Endothelial cell of umbilical vein (primary cell): ENCODE measurements at regions of chr15 and their contacts with region 1.

Region 1: DNA sequence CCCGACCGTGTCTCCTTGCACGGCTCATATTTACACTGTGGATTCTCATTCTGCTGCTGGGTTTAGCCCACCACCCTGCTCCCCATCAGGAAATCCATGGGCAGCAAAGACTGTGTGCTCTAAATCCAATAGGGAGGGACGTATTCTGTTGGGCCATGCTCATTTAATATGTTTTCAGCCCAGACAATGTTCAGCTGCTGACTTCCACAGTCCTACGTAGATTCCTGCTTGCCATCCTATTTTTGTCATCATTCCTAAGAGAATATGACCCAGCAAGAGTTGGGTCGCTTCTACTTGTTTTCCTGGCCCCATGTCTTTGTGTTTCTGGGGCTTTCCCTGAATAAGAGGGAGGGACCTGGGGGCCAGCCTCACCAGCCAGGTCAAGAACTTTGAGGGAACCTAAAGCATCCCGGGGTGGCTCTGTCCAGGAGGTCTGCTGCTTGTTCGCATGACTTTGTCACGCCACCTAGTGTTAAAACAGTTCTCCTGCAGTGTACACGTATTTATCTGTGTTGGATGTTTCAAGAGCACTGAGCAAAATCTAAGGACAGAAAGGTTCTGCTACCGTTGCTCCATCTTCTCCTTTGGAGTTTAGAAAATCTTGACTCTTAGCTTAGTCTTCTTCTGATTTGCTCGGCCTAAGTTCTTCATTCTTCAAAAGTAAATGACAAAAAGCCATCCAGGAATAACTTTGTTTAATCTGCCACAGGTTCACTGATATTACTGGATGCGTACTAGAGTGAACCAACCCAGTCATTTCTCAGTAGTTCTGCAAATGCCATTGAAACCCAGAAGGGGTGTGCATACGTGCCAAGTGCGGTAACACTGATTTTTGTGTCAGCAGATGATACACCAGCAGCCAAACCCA is 79.8 kb upstream of the NR2E3 start:
- DNase-seq: peak; percentile 66
- H3K4me3 ChIP-seq: no peak overlapping the region
- H3K27ac ChIP-seq: no peak overlapping the region
- H3K4me1 ChIP-seq: no peaks in the 10 kb centered on the region
- H3K27me3 ChIP-seq: peaks cover 0 to under 1% of the 10 kb centered on the region in 2 experiments
- CTCF ChIP-seq: peak; percentile 67 to 76
- POLR2A ChIP-seq: no peak

Region 2: DNA sequence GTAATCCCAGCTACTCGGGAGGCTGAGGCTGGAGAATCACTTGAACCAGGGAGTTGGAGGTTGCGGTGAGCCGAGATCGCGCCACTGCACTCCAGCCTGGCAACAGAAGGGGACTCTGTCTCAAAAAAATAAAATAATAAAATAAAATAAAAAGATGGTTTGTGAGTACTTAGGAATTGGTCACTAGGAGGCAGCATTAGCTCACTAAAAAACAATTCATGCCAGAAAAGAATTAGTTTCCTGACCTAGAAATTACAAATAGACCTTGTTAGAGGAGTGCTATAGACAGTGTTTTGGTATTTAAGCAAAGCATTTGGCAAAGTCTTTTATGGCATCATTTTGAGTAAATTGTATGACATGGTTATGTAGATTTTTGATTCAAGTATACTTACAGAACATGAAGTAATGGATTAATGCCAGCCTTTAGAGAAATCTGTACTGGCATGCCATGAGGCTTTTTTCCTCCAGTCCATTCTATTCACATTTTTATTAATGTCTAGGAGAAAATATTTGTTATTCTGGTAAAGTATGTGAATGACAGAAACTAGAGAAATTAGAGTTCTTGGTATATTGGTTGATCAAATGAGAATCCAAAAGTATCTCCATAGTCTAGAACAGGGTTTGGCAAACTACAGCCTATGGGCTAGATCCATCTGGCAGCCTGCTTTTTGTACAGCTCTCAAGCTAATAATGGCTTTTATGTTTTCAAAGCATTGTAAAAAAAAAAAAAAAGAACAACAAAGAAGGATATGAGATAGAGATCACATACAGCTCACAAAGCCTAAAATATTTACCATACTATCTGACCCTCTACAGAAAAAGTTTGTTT is 756.3 kb before region 1 on chr15:
- CTCF ChIA-PET with region 1: no interaction called
- POLR2A ChIA-PET with region 1: no interaction called
- dilution Hi-C with region 1: no loop called
- intact Hi-C with region 1: loop called (anchors 5 kb)
- DNase-seq: peak; percentile 66
- H3K4me3 ChIP-seq: no peak overlapping the region
- H3K27ac ChIP-seq: no peak overlapping the region
- H3K4me1 ChIP-seq: no peaks in the 10 kb centered on the region
- H3K27me3 ChIP-seq: no peaks in the 10 kb centered on the region
- CTCF ChIP-seq: peak in 1 of 2 donors; percentile 38
- POLR2A ChIP-seq: no peak

Region 3: GRCh38 chr15:71448688-71449114 is 281.8 kb before region 1 on chr15:
- CTCF ChIA-PET with region 1: interaction called, 12 read pairs
- POLR2A ChIA-PET with region 1: no interaction called
- dilution Hi-C with region 1: no loop called
- intact Hi-C with region 1: loop called (anchors 1 kb)
- DNase-seq: peak; percentile 87
- H3K4me3 ChIP-seq: no peak overlapping the region
- H3K27ac ChIP-seq: no peak overlapping the region
- H3K4me1 ChIP-seq: peaks cover 21% of the 10 kb centered on the region
- H3K27me3 ChIP-seq: no peaks in the 10 kb centered on the region
- CTCF ChIP-seq: peak; percentile 73 to 87
- POLR2A ChIP-seq: no peak

Region 4: GRCh38 chr15:71532994-71533393 is 197.5 kb before region 1 on chr15:
- CTCF ChIA-PET with region 1: interaction called, 5 read pairs
- POLR2A ChIA-PET with region 1: no interaction called
- dilution Hi-C with region 1: no loop called
- intact Hi-C with region 1: loop called (anchors 1 kb)
- DNase-seq: no peak
- H3K4me3 ChIP-seq: no peak overlapping the region
- H3K27ac ChIP-seq: no peak overlapping the region
- H3K4me1 ChIP-seq: no peaks in the 10 kb centered on the region
- H3K27me3 ChIP-seq: peaks cover 0 to 2% of the 10 kb centered on the region in 2 experiments
- CTCF ChIP-seq: peak; percentile 37 to 57
- POLR2A ChIP-seq: no peak

Region 5: DNA sequence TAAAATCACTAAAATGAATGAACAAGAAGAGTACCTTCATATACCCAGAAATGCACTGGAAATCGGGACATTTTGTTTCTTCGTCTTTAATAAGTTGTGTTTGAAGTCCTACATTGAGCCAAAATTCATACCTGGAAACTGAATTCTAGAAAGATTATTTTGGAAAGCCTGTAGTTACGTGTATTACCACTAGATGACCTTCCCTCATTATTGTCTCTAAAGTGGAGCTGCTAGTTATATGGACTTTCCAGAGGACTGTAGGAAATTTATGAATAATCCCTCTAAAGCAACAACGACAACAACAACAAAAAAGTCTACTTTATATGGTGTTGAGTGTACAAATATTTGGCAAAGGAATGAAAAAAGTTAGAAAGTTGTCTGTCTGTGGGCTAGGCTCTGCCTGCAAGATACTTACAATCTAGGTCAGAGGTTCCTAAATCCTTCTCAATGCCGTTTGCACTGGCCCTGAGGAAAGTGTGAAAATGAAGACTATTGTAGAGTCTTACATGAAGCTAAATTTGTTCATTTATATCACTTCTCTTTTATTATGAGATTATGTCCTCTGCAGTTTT is 155.0 kb before region 1 on chr15:
- CTCF ChIA-PET with region 1: interaction called, 12 read pairs
- POLR2A ChIA-PET with region 1: no interaction called
- dilution Hi-C with region 1: no loop called
- intact Hi-C with region 1: loop called (anchors 1 kb)
- DNase-seq: peak; percentile 24
- H3K4me3 ChIP-seq: no peak overlapping the region
- H3K27ac ChIP-seq: no peak overlapping the region
- H3K4me1 ChIP-seq: peaks cover 12% of the 10 kb centered on the region
- H3K27me3 ChIP-seq: no peaks in the 10 kb centered on the region
- CTCF ChIP-seq: peak; percentile 25 to 36
- POLR2A ChIP-seq: no peak

Region 6: DNA sequence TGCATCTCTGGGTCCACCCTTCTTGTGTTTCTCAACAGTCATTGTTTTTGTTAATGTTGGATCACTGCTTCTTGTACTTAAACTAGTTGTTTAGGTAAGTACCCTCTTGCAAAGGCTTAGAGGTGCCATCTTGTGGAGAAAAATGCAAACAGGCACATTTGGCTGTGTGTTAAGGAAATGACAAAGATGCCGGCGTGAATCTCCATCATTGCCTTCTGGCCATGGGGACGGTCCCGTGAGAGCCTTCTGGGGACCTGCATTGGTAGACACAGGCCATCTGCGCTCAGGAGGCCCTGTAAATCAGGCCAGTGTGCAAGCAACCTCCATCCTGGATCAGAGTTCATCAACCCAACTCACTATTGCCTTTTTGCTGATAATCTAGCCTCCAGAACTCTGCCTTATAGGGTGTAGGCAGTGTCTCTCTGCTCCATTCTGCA is 78.7 kb before region 1 on chr15:
- CTCF ChIA-PET with region 1: no interaction called
- POLR2A ChIA-PET with region 1: no interaction called
- dilution Hi-C with region 1: no loop called
- intact Hi-C with region 1: loop called (anchors 1 kb)
- DNase-seq: peak; percentile 64
- H3K4me3 ChIP-seq: no peak overlapping the region
- H3K27ac ChIP-seq: no peak overlapping the region
- H3K4me1 ChIP-seq: peaks cover 15% of the 10 kb centered on the region
- H3K27me3 ChIP-seq: peaks cover 0 to 2% of the 10 kb centered on the region in 2 experiments
- CTCF ChIP-seq: peak; percentile 38 to 43
- POLR2A ChIP-seq: no peak